ENCODE measurements at regions of chr14 and their contacts with region 1.

Region 1: GRCh38 chr14:34059855-34060638 is 109.2 kb upstream of the EGLN3 start:
- DNase-seq: peak; percentile 94

Region 2: DNA sequence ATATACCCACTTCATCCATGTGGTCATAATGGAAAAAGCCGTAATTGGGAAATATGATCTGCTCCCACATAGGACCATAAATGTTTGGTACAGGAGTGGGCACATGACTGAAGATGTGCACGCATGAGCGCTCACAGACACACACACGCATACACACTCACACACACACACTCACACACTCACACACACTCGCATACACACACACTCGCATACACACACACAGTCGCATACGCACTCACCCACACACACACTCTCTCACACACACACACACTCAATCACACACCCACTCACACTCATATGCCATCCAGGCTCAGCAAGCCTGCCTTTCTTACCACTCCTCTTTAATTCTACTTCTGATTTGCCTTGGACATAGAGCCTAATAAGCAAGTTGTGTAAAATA is 63.6 kb before region 1 on chr14:
- intact Hi-C with region 1: loop called in 1 of 2 experiments (anchors 10 kb)
- DNase-seq: no peak

Region 3: GRCh38 chr14:34262127-34262910 is 202.3 kb after region 1 on chr14:
- intact Hi-C with region 1: no loop called
- DNase-seq: no peak